ENCODE measurements at regions of chr1 and their contacts with region 1.

Region 1: GRCh38 chr1:24150234-24151174 is 7.6 kb upstream of the IL22RA1 start:
- DNase-seq: peak; percentile 91 to 100
- H3K4me3 ChIP-seq: peak overlapping the region; percentile 19 to 58 (median 34); a peak in 6 of 8 replicates
- H3K27ac ChIP-seq: peak overlapping the region; percentile 97
- H3K4me1 ChIP-seq: peaks cover 3 to 23% (median 15%) of the 10 kb centered on the region in 4 experiments
- H3K27me3 ChIP-seq: no peaks in the 10 kb centered on the region
- CTCF ChIP-seq: peak; percentile 83 to 89 (median 88)
- EP300 ChIP-seq: no peak
- POLR2A ChIP-seq: peak; percentile 76 to 91
- RAD21 ChIP-seq: peak; percentile 55 to 70; a peak in 3 of 4 replicates

Region 2: DNA sequence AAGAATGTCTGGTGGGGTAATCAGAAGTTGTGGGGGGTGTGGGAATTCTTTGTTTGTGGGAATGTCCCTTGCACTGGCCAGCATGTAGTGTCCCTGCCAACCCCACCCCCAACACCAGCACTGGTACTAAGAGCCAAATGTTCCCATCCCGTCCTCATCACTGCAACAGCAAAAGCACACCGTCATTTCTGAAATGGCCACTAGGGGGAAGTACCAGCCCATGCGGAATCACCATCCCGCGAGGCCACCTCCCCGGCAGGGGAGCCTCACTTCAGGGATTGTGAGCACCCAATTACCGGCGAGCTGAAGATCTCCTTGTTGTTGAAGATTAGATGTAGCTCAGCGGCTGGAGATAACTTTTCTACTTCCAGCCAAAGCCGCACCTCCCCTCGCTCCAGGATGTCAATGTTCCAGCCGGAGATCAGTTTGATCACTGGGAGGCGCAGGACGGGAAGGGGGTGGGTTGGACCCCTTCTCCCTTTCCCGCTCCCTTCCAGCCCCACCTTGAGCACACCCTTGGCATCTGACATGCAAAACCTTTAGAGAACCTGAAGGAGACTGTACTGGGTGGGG is 79.6 kb before region 1 on chr1:
- CTCF ChIA-PET with region 1: interaction called, 13 read pairs
- POLR2A ChIA-PET with region 1: interaction called, 11 read pairs
- DNase-seq: peak; percentile 53 to 91
- H3K4me3 ChIP-seq: peak overlapping the region in 2 of 4 experiments; percentile 29 to 42; a peak in 3 of 8 replicates
- H3K27ac ChIP-seq: no peak overlapping the region
- H3K4me1 ChIP-seq: peaks cover 0 to 3% (median under 1%) of the 10 kb centered on the region in 4 experiments; a peak in 4 of 7 replicates
- H3K27me3 ChIP-seq: no peaks in the 10 kb centered on the region; a peak in 1 of 7 replicates
- CTCF ChIP-seq: peak; percentile 90 to 94 (median 94)
- EP300 ChIP-seq: 0 out of 3 replicates have a peak, but pooled peaks of 1 of the 2 experiments have one; percentile 7
- POLR2A ChIP-seq: no peak
- RAD21 ChIP-seq: peak; percentile 86 to 93

Region 3: GRCh38 chr1:24102961-24103360 is 47.5 kb before region 1 on chr1:
- CTCF ChIA-PET with region 1: interaction called, 10 read pairs
- POLR2A ChIA-PET with region 1: interaction called, 13 read pairs
- DNase-seq: no peak
- H3K4me3 ChIP-seq: no peak overlapping the region
- H3K27ac ChIP-seq: no peak overlapping the region
- H3K4me1 ChIP-seq: peaks cover 0 to 2% (median under 1%) of the 10 kb centered on the region in 4 experiments; a peak in 3 of 7 replicates
- H3K27me3 ChIP-seq: no peaks in the 10 kb centered on the region
- CTCF ChIP-seq: no peak
- EP300 ChIP-seq: no peak
- POLR2A ChIP-seq: no peak
- RAD21 ChIP-seq: no peak

Region 4: DNA sequence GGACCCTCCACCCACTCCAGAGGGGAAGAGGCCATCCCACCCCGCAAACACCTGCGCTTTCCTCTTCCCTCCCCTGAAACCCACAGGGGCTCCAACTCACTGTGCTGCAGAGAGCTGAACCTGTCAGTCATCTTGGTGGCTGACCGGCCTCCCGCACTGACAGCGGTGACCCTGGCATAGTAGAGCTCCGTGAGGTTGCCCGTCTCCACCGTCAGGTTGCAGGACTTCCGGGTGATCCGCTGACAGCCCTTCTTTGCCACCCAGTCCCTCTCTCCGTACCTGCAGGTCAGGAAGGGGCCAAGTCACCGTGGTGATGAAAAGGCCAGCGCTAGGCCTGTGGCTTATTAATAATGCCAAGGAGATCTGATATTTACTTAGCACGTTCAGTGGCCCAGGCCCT is 13.5 kb before region 1 on chr1:
- CTCF ChIA-PET with region 1: interaction called, 24 read pairs
- POLR2A ChIA-PET with region 1: interaction called, 24 read pairs
- DNase-seq: no peak
- H3K4me3 ChIP-seq: no peak overlapping the region
- H3K27ac ChIP-seq: no peak overlapping the region
- H3K4me1 ChIP-seq: peaks cover 0 to 4% (median 0%) of the 10 kb centered on the region in 4 experiments; a peak in 3 of 7 replicates
- H3K27me3 ChIP-seq: no peaks in the 10 kb centered on the region; a peak in 1 of 7 replicates
- CTCF ChIP-seq: no peak
- EP300 ChIP-seq: no peak
- POLR2A ChIP-seq: no peak
- RAD21 ChIP-seq: no peak

Region 5: DNA sequence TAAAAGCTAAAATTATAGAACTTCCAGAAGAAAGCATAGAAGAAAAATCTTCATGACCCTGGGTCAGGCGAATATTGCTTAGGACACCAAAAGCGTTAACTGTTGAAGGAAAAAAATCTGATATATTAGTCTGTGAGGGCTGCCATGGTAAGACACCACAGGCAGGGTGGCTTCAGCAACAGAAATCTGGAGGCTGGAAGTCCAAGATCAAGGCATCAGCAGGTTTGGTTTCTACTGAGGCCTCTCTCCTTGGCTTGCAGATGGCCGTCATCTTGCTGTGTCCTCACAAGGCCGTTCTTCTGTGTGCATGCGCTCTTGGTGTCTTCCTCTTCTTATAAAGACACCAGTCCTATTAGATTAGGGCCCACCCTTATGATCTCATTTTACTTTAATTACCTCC is 22.1 kb after region 1 on chr1:
- CTCF ChIA-PET with region 1: interaction called, 42 read pairs
- POLR2A ChIA-PET with region 1: interaction called, 6 read pairs
- DNase-seq: no peak
- H3K4me3 ChIP-seq: no peak overlapping the region
- H3K27ac ChIP-seq: no peak overlapping the region
- H3K4me1 ChIP-seq: peaks cover 0 to 3% (median 0%) of the 10 kb centered on the region in 4 experiments; a peak in 2 of 7 replicates
- H3K27me3 ChIP-seq: no peaks in the 10 kb centered on the region
- CTCF ChIP-seq: no peak
- EP300 ChIP-seq: no peak
- POLR2A ChIP-seq: no peak
- RAD21 ChIP-seq: no peak

Region 6: GRCh38 chr1:24186993-24187805 is 36.7 kb after region 1 on chr1 and contains the start of gene IFNLR1:
- CTCF ChIA-PET with region 1: interaction called, 18 read pairs
- POLR2A ChIA-PET with region 1: interaction called, 82 read pairs
- DNase-seq: peak; percentile 46 to 77
- H3K4me3 ChIP-seq: peak within 1 kb of the TSS; percentile 57 to 79 (median 74)
- H3K27ac ChIP-seq: no peak within 1 kb of the TSS
- H3K4me1 ChIP-seq: peaks cover 0 to 3% (median 3%) of the 10 kb centered on the region in 4 experiments; a peak in 2 of 7 replicates
- H3K27me3 ChIP-seq: no peaks in the 10 kb centered on the region; a peak in 1 of 7 replicates
- CTCF ChIP-seq: no peak
- EP300 ChIP-seq: no peak
- POLR2A ChIP-seq: no peak; a peak in 1 of 3 replicates
- RAD21 ChIP-seq: no peak
- total RNA-seq, gene IFNLR1: 9.2 and 10.1 TPM in 2 replicates

Region 7: DNA sequence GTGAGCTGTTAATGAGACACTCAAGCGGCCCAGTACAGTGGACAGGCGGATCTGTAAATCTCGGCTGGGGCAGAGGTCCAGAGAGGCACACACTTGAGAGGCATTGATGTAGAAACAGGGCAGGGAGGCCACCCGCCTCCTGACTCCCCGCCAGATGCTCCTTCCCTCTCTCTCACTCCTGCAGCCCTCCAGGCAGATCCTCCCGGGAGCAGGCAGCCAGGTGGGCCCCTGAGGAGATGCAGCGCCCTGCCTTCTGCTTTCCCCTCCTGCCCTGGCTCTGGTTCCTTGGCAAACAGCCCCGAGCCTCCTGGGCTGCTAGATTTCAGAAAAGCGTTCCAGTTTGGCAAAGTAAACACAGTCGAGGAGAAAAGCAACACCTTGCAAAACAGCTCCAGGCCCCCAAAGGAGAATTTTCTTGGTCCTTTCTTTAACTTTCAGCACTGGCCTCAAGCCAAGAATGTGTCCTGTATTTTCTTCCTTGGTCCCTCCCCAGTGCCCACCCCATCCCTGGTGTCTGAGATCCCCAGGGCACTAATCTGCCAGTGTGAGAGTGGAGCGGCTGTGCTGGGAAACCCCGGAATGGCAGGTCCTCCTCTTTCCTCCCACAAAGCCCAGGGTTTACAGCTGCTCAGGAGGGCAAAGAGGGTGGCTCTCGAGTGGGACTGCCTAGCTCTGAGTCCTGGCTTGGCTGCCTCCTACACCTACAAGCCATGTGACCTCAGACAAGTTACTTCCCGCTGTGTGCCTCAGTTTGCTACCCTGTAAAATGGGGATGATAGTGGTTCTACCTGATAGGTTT is 66.0 kb after region 1 on chr1:
- CTCF ChIA-PET with region 1: no interaction called
- POLR2A ChIA-PET with region 1: no interaction called
- DNase-seq: no peak
- H3K4me3 ChIP-seq: no peak overlapping the region
- H3K27ac ChIP-seq: no peak overlapping the region
- H3K4me1 ChIP-seq: peaks cover 0 to 6% (median 2%) of the 10 kb centered on the region in 4 experiments; a peak in 3 of 7 replicates
- H3K27me3 ChIP-seq: no peaks in the 10 kb centered on the region
- CTCF ChIP-seq: no peak
- EP300 ChIP-seq: no peak
- POLR2A ChIP-seq: no peak
- RAD21 ChIP-seq: peak in 1 of 2 experiments; percentile 3; a peak in 1 of 4 replicates

Measured in H1 (cell line).